ENCODE measurements at regions of chr6 and their contacts with region 1.

Region 1: GRCh38 chr6:168355716-168356449 is 36.3 kb upstream of the DACT2 start:
- DNase-seq: peak; percentile 52 to 66
- ATAC-seq: peak; percentile 100
- H3K4me3 ChIP-seq: peak overlapping the region; percentile 25; the same call in 2 of the 3 replicates
- H3K27ac ChIP-seq: peak overlapping the region; percentile 59 to 84; a peak in 5 of 6 replicates
- H3K4me1 ChIP-seq: no peaks in the 10 kb centered on the region
- CTCF ChIP-seq: peak; percentile 70
- EP300 ChIP-seq: no peak
- POLR2A ChIP-seq: no peak
- RAD21 ChIP-seq: peak; percentile 86 to 92

Region 2: GRCh38 chr6:168150551-168151320 is 205.1 kb before region 1 on chr6:
- CTCF ChIA-PET with region 1: interaction called, 42 read pairs
- POLR2A ChIA-PET with region 1: no interaction called
- DNase-seq: peak in 1 of 2 experiments; percentile 22
- ATAC-seq: peak; percentile 41 to 72; a peak in 4 of 6 replicates
- H3K4me3 ChIP-seq: no peak overlapping the region
- H3K27ac ChIP-seq: peak overlapping the region in 1 of 2 experiments; percentile 76; a peak in 3 of 6 replicates
- H3K4me1 ChIP-seq: peaks cover 13% of the 10 kb centered on the region
- CTCF ChIP-seq: peak; percentile 66
- EP300 ChIP-seq: no peak
- POLR2A ChIP-seq: no peak
- RAD21 ChIP-seq: peak; percentile 85 to 90

Measured in A549 (cell line).